Calu3 (cell line): ENCODE measurements at regions of chr18 and their contacts with region 1.

Region 1: GRCh38 chr18:78073275-78073674 is 823.6 kb downstream of the GALR1 start:
- DNase-seq: no peak
- H3K4me3 Mint-ChIP-seq: no peak overlapping the region
- H3K27ac Mint-ChIP-seq: no peak overlapping the region
- H3K4me1 Mint-ChIP-seq: no peaks in the 10 kb centered on the region
- H3K27me3 Mint-ChIP-seq: no peaks in the 10 kb centered on the region
- CTCF ChIP-seq: no peak

Region 2: GRCh38 chr18:78144669-78145068 is 71.4 kb after region 1 on chr18:
- CTCF ChIA-PET with region 1: no interaction called
- intact Hi-C with region 1: loop called (anchors 10 kb)
- DNase-seq: no peak
- H3K4me3 Mint-ChIP-seq: no peak overlapping the region
- H3K27ac Mint-ChIP-seq: no peak overlapping the region
- H3K4me1 Mint-ChIP-seq: no peaks in the 10 kb centered on the region
- H3K27me3 Mint-ChIP-seq: no peaks in the 10 kb centered on the region
- CTCF ChIP-seq: no peak